Heart left ventricle (tissue), 16 donors: ENCODE measurements at regions of chr1 and their contacts with region 1.

Region 1: DNA sequence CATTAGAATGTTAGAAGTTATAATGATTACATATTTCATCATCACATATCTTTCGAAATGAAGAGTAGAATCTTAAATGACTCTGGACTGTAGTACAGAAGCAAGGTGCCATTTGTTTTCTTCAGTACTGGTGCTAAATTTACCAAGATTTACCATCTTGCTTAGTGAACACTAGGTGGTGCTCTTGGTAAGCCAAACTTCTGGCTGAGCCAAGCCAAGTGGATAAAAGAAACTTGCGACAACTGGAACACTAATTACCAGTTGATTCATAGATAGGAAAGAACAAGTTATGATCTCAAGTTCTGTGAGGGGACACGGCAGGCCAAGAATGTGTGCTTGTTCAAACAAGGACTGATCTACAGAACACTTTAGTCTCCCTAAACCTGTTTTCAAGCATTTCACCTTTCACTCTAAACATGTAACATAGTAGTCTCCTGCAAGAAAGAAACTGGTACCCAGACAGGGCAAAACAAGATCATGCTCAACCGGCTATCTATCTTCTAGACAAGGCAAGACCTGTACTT is 19.8 kb downstream of the SPRTN start:
- DNase-seq: peak in 2 of 5 donors; percentile 35 to 43
- ATAC-seq: peak; percentile 38 to 78 (median 71)
- H3K4me3 ChIP-seq: no peak overlapping the region
- H3K27ac ChIP-seq: peak overlapping the region in 5 of 12 donors; percentile 20 to 66 (median 35)
- H3K4me1 ChIP-seq: peaks cover 0 to 23% (median 9%) of the 10 kb centered on the region in 12 donors
- H3K27me3 ChIP-seq: no peaks in the 10 kb centered on the region
- CTCF ChIP-seq: peak; percentile 61 to 91 (median 82)
- POLR2A ChIP-seq: no peak

Region 2: GRCh38 chr1:231170875-231171274 is 187.0 kb before region 1 on chr1:
- intact Hi-C with region 1: no loop called
- DNase-seq: no peak
- ATAC-seq: no peak
- H3K4me3 ChIP-seq: no peak overlapping the region
- H3K27ac ChIP-seq: no peak overlapping the region
- H3K4me1 ChIP-seq: no peaks in the 10 kb centered on the region
- H3K27me3 ChIP-seq: peaks cover 0 to 15% (median 0%) of the 10 kb centered on the region in 9 donors
- CTCF ChIP-seq: no peak
- POLR2A ChIP-seq: no peak

Region 3: GRCh38 chr1:231416901-231417300 is 59.0 kb after region 1 on chr1:
- intact Hi-C with region 1: loop called in 5 of 10 experiments (anchors 2 to 10 kb)
- DNase-seq: no peak
- ATAC-seq: no peak
- H3K4me3 ChIP-seq: peak overlapping the region in 11 of 12 donors; percentile 19 to 88 (median 83)
- H3K27ac ChIP-seq: peak overlapping the region in 4 of 12 donors; percentile 5 to 35 (median 14)
- H3K4me1 ChIP-seq: peaks cover 4 to 81% (median 63%) of the 10 kb centered on the region in 12 donors
- H3K27me3 ChIP-seq: no peaks in the 10 kb centered on the region
- CTCF ChIP-seq: no peak
- POLR2A ChIP-seq: no peak

Region 4: GRCh38 chr1:231528172-231529029 is 170.5 kb after region 1 on chr1 and contains the start of gene TSNAX:
- intact Hi-C with region 1: loop called in 2 of 10 experiments (anchors 5 to 10 kb)
- DNase-seq: peak; percentile 92 to 95 (median 94)
- ATAC-seq: peak; percentile 98 to 99 (median 99)
- H3K4me3 ChIP-seq: peak within 1 kb of the TSS; percentile 38 to 92 (median 76)
- H3K27ac ChIP-seq: peak within 1 kb of the TSS; percentile 89 to 95 (median 92)
- H3K4me1 ChIP-seq: peaks cover under 1 to 58% (median 34%) of the 10 kb centered on the region in 12 donors
- H3K27me3 ChIP-seq: no peaks in the 10 kb centered on the region
- CTCF ChIP-seq: no peak
- POLR2A ChIP-seq: peak in 1 of 2 donors; percentile 86
- total RNA-seq, gene TSNAX: 16.6 to 43.5 (median 31.7) TPM

Region 5: GRCh38 chr1:231534703-231535159 is 176.8 kb after region 1 on chr1:
- intact Hi-C with region 1: loop called in 2 of 10 experiments (anchors 5 to 10 kb)
- DNase-seq: no peak
- ATAC-seq: peak in 2 of 4 donors; percentile 33 to 39
- H3K4me3 ChIP-seq: no peak overlapping the region
- H3K27ac ChIP-seq: peak overlapping the region in 4 of 12 donors; percentile 3 to 43 (median 14)
- H3K4me1 ChIP-seq: peaks cover 7 to 57% (median 47%) of the 10 kb centered on the region in 12 donors
- H3K27me3 ChIP-seq: no peaks in the 10 kb centered on the region
- CTCF ChIP-seq: no peak
- POLR2A ChIP-seq: no peak

Region 6: GRCh38 chr1:231584921-231585320 is 227.0 kb after region 1 on chr1:
- intact Hi-C with region 1: loop called in 8 of 10 experiments (anchors 1 to 5 kb)
- DNase-seq: no peak
- ATAC-seq: no peak
- H3K4me3 ChIP-seq: no peak overlapping the region
- H3K27ac ChIP-seq: no peak overlapping the region
- H3K4me1 ChIP-seq: peaks cover 0 to 14% (median 0%) of the 10 kb centered on the region in 12 donors
- H3K27me3 ChIP-seq: no peaks in the 10 kb centered on the region
- CTCF ChIP-seq: no peak
- POLR2A ChIP-seq: no peak

Region 7: GRCh38 chr1:231590453-231591198 is 232.7 kb after region 1 on chr1:
- intact Hi-C with region 1: loop called in 8 of 10 experiments (anchors 1 to 5 kb)
- DNase-seq: peak in 4 of 5 donors; percentile 47 to 70 (median 53)
- ATAC-seq: peak; percentile 64 to 95 (median 92)
- H3K4me3 ChIP-seq: no peak overlapping the region
- H3K27ac ChIP-seq: peak overlapping the region in 1 of 12 donors; percentile 10
- H3K4me1 ChIP-seq: peaks cover 0 to 16% (median 6%) of the 10 kb centered on the region in 12 donors
- H3K27me3 ChIP-seq: no peaks in the 10 kb centered on the region
- CTCF ChIP-seq: peak; percentile 65 to 85 (median 76)
- POLR2A ChIP-seq: no peak

Region 8: GRCh38 chr1:231603598-231604275 is 245.8 kb after region 1 on chr1:
- intact Hi-C with region 1: loop called in 4 of 10 experiments (anchors 1 to 5 kb)
- DNase-seq: no peak
- ATAC-seq: peak in 3 of 4 donors; percentile 46 to 67 (median 56)
- H3K4me3 ChIP-seq: peak overlapping the region in 10 of 12 donors; percentile 37 to 61 (median 52)
- H3K27ac ChIP-seq: peak overlapping the region in 7 of 12 donors; percentile 30 to 67 (median 40)
- H3K4me1 ChIP-seq: peaks cover 0 to 44% (median 23%) of the 10 kb centered on the region in 12 donors
- H3K27me3 ChIP-seq: no peaks in the 10 kb centered on the region
- CTCF ChIP-seq: peak; percentile 66 to 88 (median 78)
- POLR2A ChIP-seq: no peak